Gastrocnemius medialis (tissue), 4 donors: ENCODE measurements at regions of chr6 and their contacts with region 1.

Region 1: DNA sequence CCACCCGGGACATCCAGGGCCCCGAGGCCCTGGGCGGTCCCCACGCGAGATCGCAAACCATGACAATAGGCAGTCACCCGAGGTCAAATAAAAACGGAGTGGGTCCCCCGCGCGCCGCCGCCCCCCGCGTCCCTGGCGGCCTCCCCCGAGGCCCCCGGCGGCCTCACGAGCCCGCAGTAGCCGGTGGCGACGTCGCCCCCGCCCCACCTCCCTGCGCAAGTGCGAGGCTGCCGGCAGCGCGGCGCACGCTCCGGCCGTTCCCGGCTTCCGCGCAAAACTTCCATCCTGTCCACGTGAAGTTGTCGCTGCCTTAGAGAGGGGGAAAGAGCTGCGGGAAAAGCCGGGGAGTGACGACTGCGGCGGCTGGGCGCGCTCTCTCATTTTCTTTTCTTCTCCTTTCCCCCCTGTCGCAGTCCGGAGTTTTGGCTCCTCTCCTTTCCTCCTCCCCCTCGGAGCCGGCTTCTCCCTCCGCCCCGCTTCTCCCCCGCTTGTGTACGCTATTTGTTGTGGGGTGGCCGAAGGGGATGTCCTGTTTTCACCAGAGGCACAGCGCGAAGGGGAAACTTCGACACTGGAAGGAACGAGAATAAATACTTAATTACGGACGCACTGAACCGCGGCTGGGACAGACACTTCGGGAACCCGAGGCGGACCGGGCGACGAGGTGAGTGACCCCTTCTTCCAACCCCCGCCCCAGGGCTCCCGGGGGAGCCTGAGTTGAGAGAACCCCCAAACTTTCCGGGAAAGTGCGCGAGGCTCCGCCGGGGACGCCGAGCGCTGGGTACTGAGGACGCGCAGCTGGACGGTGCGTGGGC is at the start of gene EYA4:
- DNase-seq: peak; percentile 61 to 76
- ATAC-seq: peak; percentile 51 to 55
- H3K4me3 ChIP-seq: peak within 1 kb of the TSS; percentile 76 to 94 (median 80)
- H3K27ac ChIP-seq: peak within 1 kb of the TSS; percentile 95 to 99 (median 96)
- H3K4me1 ChIP-seq: peaks cover 19 to 28% of the 10 kb centered on the region in 2 donors
- H3K27me3 ChIP-seq: no peaks in the 10 kb centered on the region
- CTCF ChIP-seq: no peak
- POLR2A ChIP-seq: peak; percentile 66 to 82
- total RNA-seq, gene EYA4: 33.7 to 110 (median 62.1) TPM

Region 2: DNA sequence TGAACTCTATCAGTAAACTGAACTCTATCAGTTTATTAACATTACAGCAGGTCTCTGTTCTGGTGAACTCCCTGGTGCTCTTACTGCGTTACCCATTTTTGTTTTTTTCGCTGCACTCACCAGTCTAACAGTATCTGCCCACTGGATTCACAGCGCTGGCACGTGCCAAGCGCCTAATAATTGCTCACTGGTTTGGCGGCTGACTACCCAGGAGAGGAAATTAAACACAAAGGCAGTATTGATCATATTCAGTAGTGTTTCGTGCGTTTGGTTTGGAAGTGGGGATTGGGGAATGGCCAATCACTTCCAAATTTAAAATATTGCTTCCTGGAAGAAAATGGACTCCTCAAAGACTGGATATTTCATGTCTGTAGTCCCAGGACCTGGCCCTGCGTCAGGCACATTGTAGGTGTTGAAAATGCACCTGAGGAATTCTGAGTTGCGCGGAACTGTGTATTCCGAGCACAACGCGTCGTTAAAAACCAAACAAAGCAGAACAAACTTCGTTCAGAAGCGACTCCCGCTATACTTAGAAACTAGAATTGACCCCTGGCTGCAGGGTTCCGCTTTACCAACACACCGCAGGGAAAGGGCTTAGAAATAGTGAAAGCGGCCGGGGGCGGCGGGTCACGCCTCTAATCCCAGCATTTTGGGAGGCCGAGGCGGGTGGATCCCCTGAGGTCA is 428.0 kb before region 1 on chr6:
- in situ Hi-C with region 1: no loop called
- intact Hi-C with region 1: loop called (anchors 5 kb)
- DNase-seq: peak in 1 of 2 donors; percentile 46
- ATAC-seq: peak; percentile 22 to 23
- H3K4me3 ChIP-seq: peak overlapping the region; percentile 64 to 99 (median 90)
- H3K27ac ChIP-seq: peak overlapping the region; percentile 85 to 96 (median 88)
- H3K4me1 ChIP-seq: peaks cover 24 to 32% of the 10 kb centered on the region in 2 donors
- H3K27me3 ChIP-seq: no peaks in the 10 kb centered on the region
- CTCF ChIP-seq: peak in 1 of 5 experiments; percentile 11
- POLR2A ChIP-seq: no peak

Region 3: DNA sequence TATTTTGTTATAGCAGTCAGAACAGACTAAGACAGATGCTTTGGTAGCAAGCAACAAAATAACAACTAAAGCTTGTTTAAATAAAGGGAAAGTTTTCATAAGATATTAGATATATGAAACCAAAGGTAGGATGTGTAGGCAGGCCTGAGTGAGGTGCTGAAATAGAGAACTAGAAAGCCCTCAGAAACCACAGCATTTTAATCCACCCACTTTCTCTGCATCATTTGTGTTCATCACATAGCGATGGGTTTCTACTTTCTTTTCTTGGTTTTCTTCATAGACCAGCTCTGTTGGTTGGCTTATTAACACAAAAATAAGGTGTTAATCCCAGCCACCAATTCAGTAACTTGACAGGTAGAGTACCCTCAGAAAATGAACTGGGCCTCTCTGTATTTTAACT is 368.4 kb before region 1 on chr6:
- in situ Hi-C with region 1: no loop called
- intact Hi-C with region 1: no loop called
- DNase-seq: no peak
- ATAC-seq: no peak
- H3K4me3 ChIP-seq: no peak overlapping the region
- H3K27ac ChIP-seq: no peak overlapping the region
- H3K4me1 ChIP-seq: no peaks in the 10 kb centered on the region
- H3K27me3 ChIP-seq: no peaks in the 10 kb centered on the region
- CTCF ChIP-seq: no peak
- POLR2A ChIP-seq: no peak

Region 4: DNA sequence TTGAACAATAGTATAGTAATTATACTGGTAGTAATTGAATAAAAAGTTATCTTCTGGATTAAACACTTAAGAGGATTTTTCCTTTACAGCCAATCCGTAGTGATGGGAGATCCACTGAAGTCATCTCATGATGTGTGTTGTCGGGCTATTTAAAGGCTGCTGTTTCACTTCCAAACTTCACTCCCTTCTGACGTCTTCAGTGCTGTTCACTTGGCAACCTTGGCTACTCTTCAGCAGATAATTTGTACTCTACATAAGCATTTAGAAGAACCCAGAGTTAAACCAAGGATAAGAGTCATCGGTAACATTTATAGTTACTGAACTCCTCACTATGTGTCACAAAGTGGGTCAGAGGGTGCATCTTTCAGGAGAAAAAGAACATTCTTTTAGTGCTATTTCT is 179.2 kb before region 1 on chr6:
- in situ Hi-C with region 1: no loop called
- intact Hi-C with region 1: loop called (anchors 5 kb)
- DNase-seq: peak; percentile 46 to 51
- ATAC-seq: peak; percentile 97 to 99
- H3K4me3 ChIP-seq: peak overlapping the region in 2 of 4 donors; percentile 21 to 30
- H3K27ac ChIP-seq: peak overlapping the region; percentile 59 to 79 (median 74)
- H3K4me1 ChIP-seq: peaks cover 14 to 17% of the 10 kb centered on the region in 2 donors
- H3K27me3 ChIP-seq: no peaks in the 10 kb centered on the region
- CTCF ChIP-seq: no peak
- POLR2A ChIP-seq: peak in 1 of 2 donors; percentile 33

Region 5: DNA sequence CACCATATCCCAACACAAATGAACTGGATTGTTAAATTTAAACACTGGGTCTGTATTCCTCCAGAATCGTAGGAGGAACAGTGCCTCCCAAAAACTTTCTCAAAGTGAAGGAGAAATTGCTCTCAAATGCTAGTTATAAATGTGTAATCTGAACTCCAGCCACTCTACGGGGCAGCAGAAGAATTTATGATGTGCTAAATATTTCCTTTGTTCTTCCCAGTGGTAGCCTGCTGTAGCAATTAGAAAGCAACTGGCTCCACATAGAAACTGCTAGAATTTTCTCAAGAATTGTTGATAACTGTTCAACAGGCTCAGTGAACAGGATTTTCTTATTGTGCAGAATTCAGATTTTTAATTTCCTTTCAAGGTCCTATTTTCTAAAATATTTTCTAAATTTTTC is 50.0 kb before region 1 on chr6:
- in situ Hi-C with region 1: no loop called
- intact Hi-C with region 1: loop called (anchors 5 kb)
- DNase-seq: no peak
- ATAC-seq: peak; percentile 38 to 49
- H3K4me3 ChIP-seq: no peak overlapping the region
- H3K27ac ChIP-seq: peak overlapping the region in 1 of 4 donors; percentile 61
- H3K4me1 ChIP-seq: peaks cover 5 to 9% of the 10 kb centered on the region in 2 donors
- H3K27me3 ChIP-seq: no peaks in the 10 kb centered on the region
- CTCF ChIP-seq: no peak
- POLR2A ChIP-seq: no peak

Region 6: DNA sequence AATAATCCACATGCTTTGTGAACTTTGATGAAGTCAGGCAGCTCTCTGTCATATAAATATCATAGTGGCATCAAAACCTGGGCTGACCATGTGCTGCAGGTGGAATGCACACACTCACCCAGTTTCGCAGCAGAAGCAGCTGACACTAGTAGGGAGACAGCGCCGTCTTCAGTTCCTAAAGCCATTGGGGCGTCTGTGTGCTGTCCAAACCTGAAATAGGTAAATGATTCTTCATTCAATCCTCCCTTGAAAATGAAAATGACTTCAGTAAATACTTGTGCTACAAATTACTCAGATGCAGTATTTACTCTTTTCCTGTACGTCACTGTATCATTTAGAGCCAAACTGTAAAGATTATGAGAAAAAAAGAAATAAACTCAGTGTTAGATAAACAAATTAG is 127.4 kb after region 1 on chr6:
- in situ Hi-C with region 1: no loop called
- intact Hi-C with region 1: loop called (anchors 2 kb)
- DNase-seq: peak; percentile 76 to 85
- ATAC-seq: peak; percentile 92 to 97
- H3K4me3 ChIP-seq: no peak overlapping the region
- H3K27ac ChIP-seq: peak overlapping the region; percentile 68 to 80 (median 74)
- H3K4me1 ChIP-seq: peaks cover 51 to 81% of the 10 kb centered on the region in 2 donors
- H3K27me3 ChIP-seq: no peaks in the 10 kb centered on the region
- CTCF ChIP-seq: peak; percentile 36 to 73 (median 55)
- POLR2A ChIP-seq: no peak

Region 7: GRCh38 chr6:133502441-133503259 is 261.4 kb after region 1 on chr6:
- in situ Hi-C with region 1: no loop called
- intact Hi-C with region 1: loop called (anchors 2 kb)
- DNase-seq: peak in 1 of 2 donors; percentile 58
- ATAC-seq: peak; percentile 53 to 73
- H3K4me3 ChIP-seq: no peak overlapping the region
- H3K27ac ChIP-seq: peak overlapping the region; percentile 1 to 63 (median 58)
- H3K4me1 ChIP-seq: peaks cover 35 to 57% of the 10 kb centered on the region in 2 donors
- H3K27me3 ChIP-seq: no peaks in the 10 kb centered on the region
- CTCF ChIP-seq: no peak
- POLR2A ChIP-seq: no peak